Activated naive CD8-positive, alpha-beta T cell treated with anti-CD3 and anti-CD28 coated beads, Interleukin-2, amount 10 ng/mL, durations not matched to agents 7 days and 5 days (primary cell): ENCODE measurements at regions of chr12 and their contacts with region 1.

Region 1: GRCh38 chr12:102061560-102062418 is at the start of gene WASHC3:
- DNase-seq: peak; percentile 92
- ATAC-seq: peak; percentile 93
- H3K4me3 Mint-ChIP-seq: peak within 1 kb of the TSS; percentile 96
- H3K27ac Mint-ChIP-seq: peak within 1 kb of the TSS; percentile 98
- H3K4me1 Mint-ChIP-seq: peaks cover 28% of the 10 kb centered on the region
- H3K27me3 Mint-ChIP-seq: peaks cover 1% of the 10 kb centered on the region
- total RNA-seq, gene WASHC3: 53.2 to 58.0 TPM

Region 2: GRCh38 chr12:102043928-102044327 is 17.9 kb before region 1 on chr12:
- POLR2A ChIA-PET with region 1: interaction called, 11 read pairs
- DNase-seq: no peak
- ATAC-seq: peak; percentile 99
- H3K4me3 Mint-ChIP-seq: peak overlapping the region; percentile 59
- H3K27ac Mint-ChIP-seq: peak overlapping the region; percentile 58
- H3K4me1 Mint-ChIP-seq: peaks cover 15% of the 10 kb centered on the region
- H3K27me3 Mint-ChIP-seq: no peaks in the 10 kb centered on the region

Region 3: GRCh38 chr12:102119674-102120563 is 58.1 kb after region 1 on chr12 and contains the starts of genes NUP37 and PARPBP:
- POLR2A ChIA-PET with region 1: interaction called, 19 read pairs
- DNase-seq: peak; percentile 94
- ATAC-seq: peak; percentile 94
- H3K4me3 Mint-ChIP-seq: peak within 1 kb of the TSS; percentile 97
- H3K27ac Mint-ChIP-seq: peak within 1 kb of the TSS; percentile 94
- H3K4me1 Mint-ChIP-seq: peaks cover 34% of the 10 kb centered on the region
- H3K27me3 Mint-ChIP-seq: no peaks in the 10 kb centered on the region
- total RNA-seq, gene NUP37: 47.7 to 49.2 TPM
- total RNA-seq, gene PARPBP: 19.0 to 20.5 TPM